ENCODE measurements at regions of chr20 and their contacts with region 1.

Region 1: GRCh38 chr20:45576995-45577394 is 2.1 kb downstream of the WFDC8 start:
- DNase-seq: no peak
- H3K4me3 ChIP-seq: no peak overlapping the region
- H3K27ac ChIP-seq: no peak overlapping the region
- H3K4me1 ChIP-seq: no peaks in the 10 kb centered on the region
- H3K27me3 ChIP-seq: no peaks in the 10 kb centered on the region
- CTCF ChIP-seq: no peak

Region 2: GRCh38 chr20:45545754-45546453 is 31.1 kb before region 1 on chr20:
- CTCF ChIA-PET with region 1: no interaction called
- dilution Hi-C with region 1: no loop called
- in situ Hi-C with region 1: no loop called
- intact Hi-C with region 1: no loop called
- DNase-seq: peak; percentile 33
- H3K4me3 ChIP-seq: no peak overlapping the region
- H3K27ac ChIP-seq: no peak overlapping the region
- H3K4me1 ChIP-seq: no peaks in the 10 kb centered on the region
- H3K27me3 ChIP-seq: no peaks in the 10 kb centered on the region
- CTCF ChIP-seq: peak; percentile 17 to 46

Region 3: GRCh38 chr20:45672765-45673164 is 95.8 kb after region 1 on chr20:
- CTCF ChIA-PET with region 1: no interaction called
- dilution Hi-C with region 1: loop called (anchors 5 kb)
- in situ Hi-C with region 1: no loop called
- intact Hi-C with region 1: no loop called
- DNase-seq: no peak
- H3K4me3 ChIP-seq: no peak overlapping the region
- H3K27ac ChIP-seq: no peak overlapping the region
- H3K4me1 ChIP-seq: no peaks in the 10 kb centered on the region
- H3K27me3 ChIP-seq: no peaks in the 10 kb centered on the region
- CTCF ChIP-seq: no peak